Activated naive CD4-positive, alpha-beta T cell treated with anti-CD3 and anti-CD28 coated beads for 36 hours (primary cell): ENCODE measurements at regions of chr18 and their contacts with region 1.

Region 1: GRCh38 chr18:33653231-33653630 is 75.2 kb downstream of the ASXL3 start:
- DNase-seq: no peak
- H3K4me3 Mint-ChIP-seq: no peak overlapping the region
- H3K27ac Mint-ChIP-seq: no peak overlapping the region
- H3K4me1 Mint-ChIP-seq: no peaks in the 10 kb centered on the region
- H3K27me3 Mint-ChIP-seq: no peaks in the 10 kb centered on the region

Region 2: DNA sequence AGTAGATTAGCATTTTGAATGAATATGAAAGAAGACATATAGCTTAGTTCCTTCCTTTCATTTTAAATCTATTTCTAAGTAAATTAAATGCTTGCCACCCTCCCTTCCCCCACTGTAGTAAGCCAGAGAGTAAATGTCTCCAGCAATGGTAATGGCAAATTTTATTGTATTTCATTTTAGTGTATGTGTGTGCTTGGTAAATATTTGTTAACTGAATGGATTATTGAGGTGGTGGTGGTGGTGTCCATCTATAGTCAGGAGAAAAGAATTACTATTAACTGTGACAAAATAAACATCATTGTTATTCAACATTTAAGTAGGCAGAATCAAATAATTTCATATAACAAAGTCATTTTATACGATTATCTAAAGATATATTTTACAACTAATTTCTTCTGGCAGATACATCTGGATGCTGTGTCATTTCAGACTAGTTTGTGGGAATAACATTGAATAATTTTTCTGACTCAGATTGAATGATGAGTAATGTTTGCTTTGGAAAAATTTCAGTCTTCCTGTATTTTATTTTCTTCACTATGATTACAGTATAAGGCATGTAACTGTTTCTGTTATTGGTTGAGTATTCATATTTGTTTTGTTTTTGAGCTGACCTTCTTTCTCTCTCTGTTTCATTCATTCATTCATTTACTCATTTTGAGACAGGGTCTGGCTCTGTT is 56.9 kb before region 1 on chr18:
- CTCF ChIA-PET with region 1: no interaction called
- intact Hi-C with region 1: loop called (anchors 10 kb)
- DNase-seq: no peak
- H3K4me3 Mint-ChIP-seq: no peak overlapping the region
- H3K27ac Mint-ChIP-seq: no peak overlapping the region
- H3K4me1 Mint-ChIP-seq: no peaks in the 10 kb centered on the region
- H3K27me3 Mint-ChIP-seq: no peaks in the 10 kb centered on the region